A673 (cell line): ENCODE measurements at regions of chr18 and their contacts with region 1.

Region 1: GRCh38 chr18:42706618-42707017 is 408.9 kb downstream of the RIT2 start:
- DNase-seq: peak; percentile 46
- H3K4me3 ChIP-seq: no peak overlapping the region
- H3K27ac ChIP-seq: no peak overlapping the region
- H3K4me1 ChIP-seq: no peaks in the 10 kb centered on the region
- H3K27me3 ChIP-seq: no peaks in the 10 kb centered on the region
- CTCF ChIP-seq: no peak

Region 2: DNA sequence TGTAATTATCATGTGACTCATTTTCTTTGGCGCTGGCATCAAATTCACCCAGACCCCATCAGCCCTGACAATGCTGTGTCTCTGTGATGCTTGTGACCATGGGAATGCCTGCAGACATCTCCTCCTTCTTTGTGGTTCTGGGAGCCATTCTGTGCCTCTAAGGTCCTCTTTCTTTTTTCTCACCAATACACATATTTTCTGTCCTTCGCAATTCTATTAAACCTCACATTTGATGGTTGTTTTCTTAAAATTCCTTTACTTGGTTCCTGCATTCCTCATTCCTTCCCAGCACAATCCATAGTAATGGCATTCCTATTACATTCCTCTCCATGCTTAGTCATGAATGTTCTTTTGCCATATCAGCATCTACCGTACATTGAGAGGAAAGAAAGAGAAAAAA is 376.3 kb before region 1 on chr18:
- CTCF ChIA-PET with region 1: interaction called, 10 read pairs
- POLR2A ChIA-PET with region 1: no interaction called
- intact Hi-C with region 1: no loop called
- DNase-seq: peak; percentile 41
- H3K4me3 ChIP-seq: no peak overlapping the region
- H3K27ac ChIP-seq: no peak overlapping the region
- H3K4me1 ChIP-seq: peaks cover 14% of the 10 kb centered on the region
- H3K27me3 ChIP-seq: no peaks in the 10 kb centered on the region
- CTCF ChIP-seq: no peak

Region 3: GRCh38 chr18:42477267-42477666 is 229.4 kb before region 1 on chr18:
- CTCF ChIA-PET with region 1: no interaction called
- POLR2A ChIA-PET with region 1: no interaction called
- intact Hi-C with region 1: no loop called
- DNase-seq: no peak
- H3K4me3 ChIP-seq: no peak overlapping the region
- H3K27ac ChIP-seq: no peak overlapping the region
- H3K4me1 ChIP-seq: no peaks in the 10 kb centered on the region
- H3K27me3 ChIP-seq: no peaks in the 10 kb centered on the region
- CTCF ChIP-seq: no peak